ENCODE measurements at regions of chr6 and their contacts with region 1.

Region 1: DNA sequence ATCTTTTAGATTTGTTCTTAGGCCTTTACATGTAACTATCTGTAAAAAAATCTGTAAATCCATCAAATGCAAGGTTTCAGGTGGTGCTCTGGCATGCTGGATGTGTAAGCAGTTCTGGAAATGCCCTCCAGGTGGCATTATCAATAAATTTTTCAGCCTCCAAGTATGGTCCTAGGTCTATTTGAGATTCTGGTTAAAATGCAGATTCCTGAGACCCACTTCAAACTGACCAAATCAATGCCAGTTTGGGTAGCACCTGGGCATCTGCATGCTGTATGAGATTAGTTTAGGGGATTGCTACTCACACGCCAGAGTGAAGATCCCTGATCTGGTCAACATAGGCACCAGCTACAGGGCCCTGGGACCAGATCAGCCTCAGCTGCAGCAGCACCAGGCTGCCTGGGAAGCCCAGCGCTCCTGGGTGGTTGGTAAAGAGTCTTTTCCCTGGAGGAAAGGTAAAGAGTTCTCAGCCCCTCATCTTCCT is 507.3 kb upstream of the CITED2 start:
- DNase-seq: peak; percentile 73
- ATAC-seq: peak; percentile 52

Region 2: GRCh38 chr6:139510040-139510790 is 371.6 kb before region 1 on chr6:
- intact Hi-C with region 1: loop called (anchors 5 kb)
- DNase-seq: peak; percentile 54
- ATAC-seq: peak; percentile 96

Region 3: GRCh38 chr6:139973669-139974344 is 92.0 kb after region 1 on chr6:
- intact Hi-C with region 1: loop called (anchors 5 kb)
- DNase-seq: no peak
- ATAC-seq: peak; percentile 77

Region 4: GRCh38 chr6:140441256-140441655 is 559.5 kb after region 1 on chr6:
- intact Hi-C with region 1: loop called (anchors 2 kb)
- DNase-seq: peak; percentile 44
- ATAC-seq: peak; percentile 92

Measured in Right ventricle myocardium inferior (tissue), 1 donor.